B cell (primary cell): ENCODE measurements at regions of chr2 and their contacts with region 1.

Region 1: DNA sequence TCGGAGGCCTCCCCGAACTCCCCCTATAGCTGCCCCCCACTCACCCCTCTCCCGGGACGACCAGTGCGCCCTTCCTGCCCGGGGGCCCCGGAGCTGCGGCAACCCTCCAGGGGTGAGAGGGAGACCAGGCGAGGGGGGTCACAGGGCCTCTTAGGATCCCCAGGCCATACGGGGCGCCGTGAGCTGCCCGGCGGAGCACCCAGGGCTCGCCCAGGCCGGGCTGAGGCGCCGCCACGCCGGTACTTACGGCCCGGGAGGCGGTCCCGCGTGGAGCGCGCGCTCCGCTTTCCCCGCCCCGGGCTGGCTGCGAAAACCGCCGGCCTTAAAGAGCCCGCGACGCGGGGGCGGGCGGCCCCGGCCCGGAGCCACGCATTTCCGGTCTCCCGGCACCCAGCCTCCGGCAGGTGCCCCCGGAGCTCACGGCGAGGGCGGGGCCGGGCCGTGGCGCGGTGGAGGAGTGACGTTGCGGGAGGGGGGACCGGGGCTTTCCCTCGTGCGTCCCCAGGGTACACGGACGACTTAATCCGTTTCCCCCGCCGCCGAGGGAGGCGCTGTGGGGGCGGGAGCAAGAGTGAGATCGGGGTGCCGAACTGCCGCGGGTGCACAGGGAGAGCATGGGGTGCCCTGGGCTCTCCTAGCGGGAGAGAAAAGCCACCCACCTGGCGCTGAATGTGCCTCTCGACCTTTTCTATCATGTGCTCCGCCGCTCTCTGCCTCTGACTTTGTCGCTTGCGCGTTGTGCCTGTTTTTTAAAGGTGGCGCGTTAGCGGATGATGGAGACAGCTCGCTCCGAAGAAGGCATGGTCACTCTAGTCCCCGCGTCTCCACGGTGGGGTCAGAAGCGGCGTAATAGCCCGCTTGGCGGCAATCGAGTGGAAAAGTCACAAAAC is at the start of gene METTL21A:
- DNase-seq: peak; percentile 99
- ATAC-seq: peak; percentile 78
- H3K4me3 ChIP-seq: peak within 1 kb of the TSS; percentile 83 to 100 (median 95)
- H3K4me3 Mint-ChIP-seq: peak within 1 kb of the TSS; percentile 97
- H3K27ac ChIP-seq: peak within 1 kb of the TSS; percentile 98 to 99
- H3K27ac Mint-ChIP-seq: peak within 1 kb of the TSS; percentile 97
- H3K4me1 ChIP-seq: peaks cover 40 to 56% of the 10 kb centered on the region in 2 donors
- H3K4me1 Mint-ChIP-seq: peaks cover 45% of the 10 kb centered on the region
- H3K27me3 ChIP-seq: no peaks in the 10 kb centered on the region
- H3K27me3 Mint-ChIP-seq: no peaks in the 10 kb centered on the region
- CTCF ChIP-seq: peak; percentile 60
- total RNA-seq, gene METTL21A: 33.1 and 34.4 TPM in 2 replicates

Region 2: GRCh38 chr2:207503234-207503633 is 122.0 kb before region 1 on chr2:
- CTCF ChIA-PET with region 1: interaction called, 19 read pairs
- POLR2A ChIA-PET with region 1: interaction called, 7 read pairs
- intact Hi-C with region 1: no loop called
- DNase-seq: no peak
- ATAC-seq: peak; percentile 48
- H3K4me3 ChIP-seq: peak overlapping the region in 4 of 5 experiments; percentile 3 to 35 (median 6)
- H3K4me3 Mint-ChIP-seq: peak overlapping the region; percentile 68
- H3K27ac ChIP-seq: peak overlapping the region; percentile 84 to 88
- H3K27ac Mint-ChIP-seq: peak overlapping the region; percentile 90
- H3K4me1 ChIP-seq: peaks cover 76 to 78% of the 10 kb centered on the region in 2 donors
- H3K4me1 Mint-ChIP-seq: peaks cover 79% of the 10 kb centered on the region
- H3K27me3 ChIP-seq: no peaks in the 10 kb centered on the region
- H3K27me3 Mint-ChIP-seq: no peaks in the 10 kb centered on the region
- CTCF ChIP-seq: no peak

Region 3: DNA sequence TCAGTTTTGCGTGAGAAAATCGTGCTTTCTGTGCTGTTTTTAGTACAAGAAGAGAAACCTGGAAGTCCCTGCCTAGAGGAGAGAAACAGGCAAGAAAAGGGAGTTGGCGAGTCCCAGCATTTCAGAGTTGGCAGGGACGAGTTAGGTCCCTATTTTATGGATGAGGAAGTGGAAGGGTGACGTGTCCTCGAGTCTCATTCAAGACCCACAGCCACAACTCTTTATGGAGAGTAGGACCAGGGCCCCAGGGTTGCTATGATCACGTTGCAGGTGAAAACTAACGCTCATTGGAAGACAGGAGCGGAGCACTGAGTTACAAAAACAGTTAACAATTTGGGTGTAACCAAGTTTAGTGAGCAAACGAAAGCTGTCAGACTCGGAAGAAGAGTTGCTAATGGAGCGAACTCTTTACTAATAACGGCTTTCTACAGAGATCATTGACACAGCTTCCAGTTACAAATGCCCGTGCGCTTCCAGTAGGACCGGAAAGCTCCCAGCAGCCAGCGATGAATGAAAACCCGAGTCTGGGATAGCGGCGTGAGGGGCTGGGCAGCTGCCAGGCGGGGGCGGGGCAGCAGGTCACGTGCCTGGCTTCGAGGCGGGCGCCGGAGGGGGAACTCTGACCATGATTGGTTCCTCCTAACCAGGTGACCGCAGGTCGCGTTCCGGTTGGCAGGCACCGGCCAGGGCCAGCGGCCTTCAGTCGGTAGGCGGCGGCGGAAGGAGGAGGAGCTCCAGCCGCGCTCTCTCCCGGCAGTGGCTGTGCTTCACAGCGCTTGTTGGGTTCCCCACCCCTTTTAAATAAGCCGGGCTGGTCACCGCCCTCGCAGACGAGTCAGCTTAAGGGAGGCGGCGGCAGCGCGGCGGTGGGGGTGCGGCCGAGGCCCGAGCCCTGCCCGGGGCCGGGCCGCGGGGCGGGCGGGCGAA is 85.8 kb after region 1 on chr2 and contains the start of gene CCNYL1:
- CTCF ChIA-PET with region 1: interaction called, 27 read pairs
- POLR2A ChIA-PET with region 1: interaction called, 24 read pairs
- intact Hi-C with region 1: loop called (anchors 1 kb)
- DNase-seq: peak; percentile 99
- ATAC-seq: peak; percentile 94
- H3K4me3 ChIP-seq: peak within 1 kb of the TSS; percentile 81 to 98 (median 93)
- H3K4me3 Mint-ChIP-seq: peak within 1 kb of the TSS; percentile 91
- H3K27ac ChIP-seq: peak within 1 kb of the TSS; percentile 78 to 83
- H3K27ac Mint-ChIP-seq: peak within 1 kb of the TSS; percentile 88
- H3K4me1 ChIP-seq: peaks cover 17 to 19% of the 10 kb centered on the region in 2 donors
- H3K4me1 Mint-ChIP-seq: peaks cover 23% of the 10 kb centered on the region
- H3K27me3 ChIP-seq: no peaks in the 10 kb centered on the region
- H3K27me3 Mint-ChIP-seq: no peaks in the 10 kb centered on the region
- CTCF ChIP-seq: no peak
- total RNA-seq, gene CCNYL1: 14.2 and 15.1 TPM in 2 replicates

Region 4: GRCh38 chr2:207769597-207770486 is 144.6 kb after region 1 on chr2 and contains the start of gene FZD5:
- CTCF ChIA-PET with region 1: no interaction called
- POLR2A ChIA-PET with region 1: interaction called, 6 read pairs
- intact Hi-C with region 1: loop called (anchors 1 kb)
- DNase-seq: peak; percentile 89
- ATAC-seq: peak; percentile 88
- H3K4me3 ChIP-seq: peak within 1 kb of the TSS; percentile 55 to 87 (median 65)
- H3K4me3 Mint-ChIP-seq: peak within 1 kb of the TSS; percentile 89
- H3K27ac ChIP-seq: no peak within 1 kb of the TSS
- H3K27ac Mint-ChIP-seq: peak within 1 kb of the TSS; percentile 80
- H3K4me1 ChIP-seq: peaks cover 32 to 44% of the 10 kb centered on the region in 2 donors
- H3K4me1 Mint-ChIP-seq: peaks cover 36% of the 10 kb centered on the region
- H3K27me3 ChIP-seq: peaks cover 0 to 15% (median 4%) of the 10 kb centered on the region in 4 experiments
- H3K27me3 Mint-ChIP-seq: peaks cover 6% of the 10 kb centered on the region
- CTCF ChIP-seq: peak; percentile 33
- total RNA-seq, gene FZD5: 1.8 and 2.5 TPM in 2 replicates

Region 5: DNA sequence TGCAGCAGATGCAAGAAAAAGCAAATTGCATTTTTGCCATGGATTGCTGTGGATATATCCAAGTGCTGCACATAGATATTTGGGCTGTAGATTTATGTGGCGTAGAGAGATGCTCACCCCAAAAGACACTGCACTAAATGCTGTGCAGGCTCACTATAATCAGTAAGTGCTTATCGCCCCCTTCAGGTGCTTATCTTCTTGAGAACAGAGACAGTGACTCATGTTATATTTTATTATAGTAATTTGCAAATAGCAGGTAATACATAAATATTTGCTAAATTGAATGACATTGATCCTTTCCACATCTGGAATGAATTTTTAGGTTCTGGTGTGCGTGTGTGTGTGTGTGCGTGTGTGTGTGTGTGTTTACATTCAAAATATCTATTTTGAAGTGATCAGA is 436.9 kb after region 1 on chr2:
- CTCF ChIA-PET with region 1: no interaction called
- POLR2A ChIA-PET with region 1: no interaction called
- intact Hi-C with region 1: loop called (anchors 1 kb)
- DNase-seq: peak; percentile 31
- ATAC-seq: no peak
- H3K4me3 ChIP-seq: no peak overlapping the region
- H3K4me3 Mint-ChIP-seq: no peak overlapping the region
- H3K27ac ChIP-seq: no peak overlapping the region
- H3K27ac Mint-ChIP-seq: no peak overlapping the region
- H3K4me1 ChIP-seq: no peaks in the 10 kb centered on the region
- H3K4me1 Mint-ChIP-seq: peaks cover 6% of the 10 kb centered on the region
- H3K27me3 ChIP-seq: no peaks in the 10 kb centered on the region
- H3K27me3 Mint-ChIP-seq: peaks cover 12% of the 10 kb centered on the region
- CTCF ChIP-seq: peak; percentile 22